ENCODE measurements at regions of chr12 and their contacts with region 1.

Region 1: GRCh38 chr12:1795785-1796514 is 24.4 kb upstream of the LRTM2 start:
- DNase-seq: peak; percentile 94 to 95
- ATAC-seq: peak; percentile 88

Region 2: DNA sequence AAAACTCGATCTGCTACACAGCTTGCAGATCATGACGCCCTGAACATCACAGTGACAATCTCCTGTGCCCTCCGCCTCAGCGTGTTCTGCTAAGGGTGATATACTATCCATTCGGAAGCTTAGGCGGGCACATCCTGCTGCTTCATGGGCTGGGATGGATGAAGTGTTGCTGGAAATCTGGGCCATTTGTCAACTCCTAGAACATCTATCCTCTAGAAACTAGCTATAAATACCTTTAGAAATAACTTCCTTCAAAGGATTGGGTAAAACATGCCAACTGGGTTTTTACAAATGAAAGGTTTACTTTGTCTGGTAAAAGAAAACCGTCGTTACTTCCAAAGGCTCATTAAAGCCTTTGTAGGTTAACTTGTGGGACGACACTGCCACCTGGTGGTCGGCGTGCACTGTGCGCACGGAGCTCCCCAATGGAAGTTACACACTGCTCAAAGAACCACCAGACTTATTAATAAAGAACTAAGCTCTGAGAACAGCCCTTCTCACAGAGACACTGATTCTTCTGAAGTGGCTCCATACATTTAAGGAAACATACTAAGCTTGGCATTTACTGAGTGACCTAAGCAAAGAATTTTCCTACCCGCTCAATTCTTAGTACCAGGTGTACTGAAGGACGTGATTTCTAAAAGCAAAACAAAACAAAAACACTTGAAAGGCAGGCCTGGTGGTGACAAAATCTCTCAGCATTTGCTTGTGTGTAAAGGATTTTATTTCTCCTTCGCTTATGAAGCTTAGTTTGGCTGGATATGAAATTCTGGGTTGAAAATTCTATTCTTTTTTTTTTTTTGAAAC is 144.1 kb after region 1 on chr12:
- intact Hi-C with region 1: loop called (anchors 5 kb)
- DNase-seq: peak; percentile 83 to 92
- ATAC-seq: peak; percentile 56

Measured in left colon (tissue), 2 donors.